Lower lobe of right lung (tissue), 2 donors: ENCODE measurements at regions of chr1 and their contacts with region 1.

Region 1: GRCh38 chr1:156129706-156130581 is 15.4 kb downstream of the LMNA start:
- DNase-seq: peak; percentile 88
- ATAC-seq: peak; percentile 65 to 83
- H3K4me3 ChIP-seq: peak overlapping the region; percentile 24
- H3K27ac ChIP-seq: peak overlapping the region; percentile 99
- H3K4me1 ChIP-seq: peaks cover 59% of the 10 kb centered on the region
- H3K27me3 ChIP-seq: no peaks in the 10 kb centered on the region
- CTCF ChIP-seq: peak; percentile 99

Region 2: DNA sequence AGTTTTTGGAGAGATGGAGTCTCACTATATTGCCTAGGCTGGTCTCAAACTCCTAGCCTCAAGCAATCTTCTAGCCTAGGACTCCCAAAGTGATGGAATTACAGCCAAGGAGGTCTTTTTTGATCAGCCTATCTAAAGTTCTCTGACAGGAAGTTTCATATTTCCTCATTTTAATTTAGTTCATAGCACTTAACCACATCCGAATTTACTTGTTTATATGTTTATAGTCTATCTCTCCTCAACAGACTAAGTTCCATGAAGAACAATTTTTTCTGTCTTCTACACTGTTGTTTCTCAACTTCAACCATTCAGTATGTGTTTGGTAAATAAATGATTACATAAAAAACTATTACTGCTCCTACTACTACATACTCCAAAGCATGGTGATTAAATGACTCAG is 320.9 kb before region 1 on chr1:
- intact Hi-C with region 1: no loop called
- DNase-seq: no peak
- ATAC-seq: no peak
- H3K4me3 ChIP-seq: no peak overlapping the region
- H3K27ac ChIP-seq: no peak overlapping the region
- H3K4me1 ChIP-seq: peaks cover 5% of the 10 kb centered on the region
- H3K27me3 ChIP-seq: no peaks in the 10 kb centered on the region
- CTCF ChIP-seq: no peak

Region 3: DNA sequence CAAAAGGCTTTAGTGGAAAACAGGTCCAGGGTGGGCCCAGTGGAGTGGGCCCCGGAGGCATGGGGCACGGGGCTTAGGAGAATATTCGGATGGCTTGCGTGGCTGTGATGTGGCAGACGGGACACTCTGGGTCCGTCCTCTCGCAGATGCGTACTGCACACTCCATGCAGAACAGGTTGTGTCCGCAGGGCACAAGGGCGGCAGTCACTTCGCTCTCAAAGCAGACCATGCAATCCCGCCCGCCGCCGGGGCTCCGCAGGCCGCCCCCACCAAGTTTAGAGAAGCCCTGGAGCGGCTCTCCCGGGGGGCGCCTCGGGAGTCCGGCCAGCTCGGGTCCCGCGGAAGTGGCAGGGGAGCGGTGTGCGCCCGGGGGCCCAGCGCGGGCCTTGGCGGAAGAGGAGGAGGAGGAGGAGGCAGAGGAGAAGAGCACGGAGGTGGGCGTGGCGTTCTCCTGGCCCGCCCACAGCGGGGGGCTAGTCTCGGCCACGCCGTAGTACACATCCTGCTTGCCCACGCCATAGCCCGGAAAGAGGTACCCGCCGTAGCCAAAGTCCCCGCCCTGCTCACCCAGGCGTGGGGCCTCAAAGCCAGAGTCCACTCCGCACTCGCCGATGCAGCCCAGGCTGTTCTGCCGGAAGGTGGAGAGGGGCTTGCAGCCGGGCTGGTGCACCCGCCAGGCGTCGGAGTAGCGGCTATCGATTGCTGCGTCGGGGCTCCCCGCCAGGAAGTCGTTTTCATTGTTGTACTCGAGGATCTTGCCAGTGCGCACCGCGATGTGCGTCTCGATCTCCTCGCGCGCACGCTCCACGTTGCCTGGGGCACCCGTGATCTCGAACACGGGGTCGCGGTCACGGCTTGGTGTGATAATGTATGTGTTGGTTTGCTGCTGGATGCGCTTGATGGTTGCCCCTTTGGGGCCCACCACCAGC is 53.2 kb before region 1 on chr1:
- intact Hi-C with region 1: no loop called
- DNase-seq: peak; percentile 64
- ATAC-seq: peak; percentile 69 to 74
- H3K4me3 ChIP-seq: peak overlapping the region; percentile 58
- H3K27ac ChIP-seq: peak overlapping the region; percentile 75
- H3K4me1 ChIP-seq: peaks cover 22% of the 10 kb centered on the region
- H3K27me3 ChIP-seq: no peaks in the 10 kb centered on the region
- CTCF ChIP-seq: no peak

Region 4: DNA sequence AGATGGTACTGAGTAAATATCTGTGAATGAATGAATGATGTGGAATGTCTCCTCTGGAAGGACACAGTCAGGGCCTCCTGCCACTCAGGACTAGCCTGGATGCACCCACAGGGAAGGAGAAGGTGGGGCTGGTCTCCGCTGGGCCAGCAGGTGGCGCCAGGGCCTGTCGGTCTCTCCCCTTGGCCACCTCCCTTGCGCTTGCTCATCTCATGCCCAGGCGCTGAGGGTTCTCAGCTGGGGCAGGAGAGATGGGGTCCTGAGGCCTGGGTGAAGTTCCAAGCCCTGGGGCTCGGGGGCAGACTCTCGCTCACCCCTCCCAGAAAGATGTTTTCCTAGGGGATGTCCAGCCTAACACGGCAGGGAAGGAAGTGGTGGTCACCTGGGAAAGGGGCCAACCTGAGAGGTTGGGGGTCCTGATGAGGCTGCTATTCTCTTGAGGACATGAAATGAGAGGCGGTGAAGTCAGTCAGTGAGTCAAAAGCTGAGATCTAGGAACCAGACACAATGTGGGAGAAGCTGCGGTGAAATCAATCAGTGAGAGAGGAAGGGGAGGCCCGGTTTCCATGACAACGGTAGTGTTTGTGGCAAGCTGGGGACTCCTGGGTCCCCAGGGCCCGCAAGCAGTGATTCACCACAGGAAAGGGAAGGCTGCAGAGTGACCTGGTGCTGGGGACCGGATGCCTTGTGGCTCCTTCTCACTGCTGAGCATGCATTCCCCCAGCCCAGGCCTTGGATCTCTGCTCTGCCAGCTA is 33.1 kb before region 1 on chr1:
- intact Hi-C with region 1: loop called (anchors 5 kb)
- DNase-seq: peak; percentile 93
- ATAC-seq: peak; percentile 96 to 97
- H3K4me3 ChIP-seq: no peak overlapping the region
- H3K27ac ChIP-seq: peak overlapping the region; percentile 76
- H3K4me1 ChIP-seq: peaks cover 28% of the 10 kb centered on the region
- H3K27me3 ChIP-seq: no peaks in the 10 kb centered on the region
- CTCF ChIP-seq: peak; percentile 96

Region 5: GRCh38 chr1:156276966-156277381 is 147.0 kb after region 1 on chr1:
- intact Hi-C with region 1: no loop called
- DNase-seq: no peak
- ATAC-seq: peak; percentile 13 to 23
- H3K4me3 ChIP-seq: no peak overlapping the region
- H3K27ac ChIP-seq: peak overlapping the region; percentile 3
- H3K4me1 ChIP-seq: peaks cover 19% of the 10 kb centered on the region
- H3K27me3 ChIP-seq: no peaks in the 10 kb centered on the region
- CTCF ChIP-seq: no peak